CD14-positive monocyte (primary cell): ENCODE measurements at regions of chr19 and their contacts with region 1.

Region 1: DNA sequence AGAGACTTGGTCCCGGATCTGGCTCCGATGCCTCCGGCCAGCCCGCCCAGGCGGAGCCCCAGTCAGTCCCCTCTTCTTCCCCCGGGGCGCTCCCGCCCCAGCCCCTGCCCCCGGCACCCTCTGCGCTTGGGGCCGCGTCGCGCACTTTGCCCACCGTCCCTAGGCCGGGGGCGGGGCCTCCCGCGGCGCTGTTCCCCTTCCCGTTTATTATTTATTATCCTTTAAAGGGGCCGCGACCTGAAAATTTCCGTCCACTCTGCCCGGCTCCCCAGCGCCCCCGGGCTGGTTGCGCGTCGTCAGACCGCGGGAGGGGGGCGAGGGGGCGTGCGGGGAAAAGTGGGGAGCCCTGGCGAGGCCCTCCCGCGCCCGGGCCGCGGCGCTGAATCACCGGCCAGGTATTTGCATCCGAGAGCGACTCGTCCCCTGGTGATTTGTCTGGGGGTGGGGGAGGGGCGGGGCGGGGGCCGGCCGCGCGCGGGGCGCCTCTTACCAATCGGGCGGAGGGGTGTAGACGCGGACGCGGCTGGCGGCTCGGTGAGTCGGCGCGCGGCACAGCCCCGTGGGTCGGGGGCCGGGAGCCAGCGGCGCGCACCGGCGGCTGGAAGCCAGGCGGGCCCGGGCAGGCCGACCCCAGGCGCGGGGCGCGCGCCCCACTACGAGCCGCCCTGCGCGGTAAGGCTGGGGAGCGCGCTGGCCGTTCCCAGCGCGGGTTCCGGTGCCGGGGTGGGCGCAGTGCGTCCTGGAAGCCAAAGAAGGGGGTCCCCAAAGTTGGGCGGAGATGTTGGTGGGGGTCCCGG is at the start of gene ARID3A:
- DNase-seq: peak; percentile 69 to 75 (median 73)
- H3K4me3 ChIP-seq: peak within 1 kb of the TSS; percentile 89 to 99 (median 90)
- H3K4me3 Mint-ChIP-seq: peak within 1 kb of the TSS; percentile 84 to 89
- H3K27ac ChIP-seq: peak within 1 kb of the TSS; percentile 85 to 87
- H3K27ac Mint-ChIP-seq: peak within 1 kb of the TSS in 6 of 7 donors; percentile 79 to 96 (median 92)
- H3K4me1 ChIP-seq: peaks cover 40 to 45% of the 10 kb centered on the region in 2 donors
- H3K4me1 Mint-ChIP-seq: peaks cover 41% of the 10 kb centered on the region
- H3K27me3 ChIP-seq: peaks cover 1 to 8% of the 10 kb centered on the region in 2 donors
- H3K27me3 Mint-ChIP-seq: peaks cover 14 to 16% (median 15%) of the 10 kb centered on the region in 3 donors
- CTCF ChIP-seq: no peak
- polyA plus RNA-seq, gene ARID3A: 2.1 to 41.6 (median 3.2) TPM

Region 2: DNA sequence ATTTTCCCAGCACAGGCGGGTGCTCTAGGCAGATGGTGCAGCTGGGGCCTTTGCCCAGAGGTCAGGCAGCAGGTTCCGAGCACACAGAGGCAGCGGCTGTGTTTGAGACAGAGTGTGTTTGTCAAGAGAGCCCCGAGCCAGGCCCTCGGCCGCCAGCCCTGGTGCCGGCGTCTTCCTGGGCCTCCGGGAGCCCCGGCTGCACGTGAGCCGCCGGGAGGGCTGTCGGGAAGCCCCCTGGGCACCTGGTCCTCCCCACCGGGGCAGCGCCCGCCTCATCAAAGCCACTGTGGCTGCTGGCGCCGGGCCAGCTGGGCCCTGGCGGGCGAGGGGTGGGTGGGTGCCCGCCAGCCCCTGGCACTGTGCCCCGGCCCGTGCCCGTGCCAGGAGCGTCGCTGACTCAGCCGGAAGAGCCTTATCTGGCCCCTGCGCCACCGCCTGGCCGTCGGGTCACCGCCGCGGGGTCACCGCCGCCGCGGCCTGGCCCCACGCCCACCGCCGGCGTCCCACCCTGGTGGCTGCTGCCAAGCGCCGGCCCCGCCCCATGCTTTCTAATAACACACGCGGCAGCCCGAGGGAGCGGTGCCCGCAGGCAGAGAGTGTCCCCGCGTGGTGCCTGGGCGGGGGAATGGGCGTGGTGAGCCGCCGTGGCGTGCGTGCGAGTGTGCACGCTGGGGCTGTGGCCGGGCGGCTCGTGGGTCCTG is 15.0 kb after region 1 on chr19:
- intact Hi-C with region 1: loop called (anchors 2 kb)
- DNase-seq: peak; percentile 76 to 90 (median 90)
- H3K4me3 ChIP-seq: peak overlapping the region; percentile 17 to 71 (median 21)
- H3K4me3 Mint-ChIP-seq: peak overlapping the region; percentile 72 to 85
- H3K27ac ChIP-seq: peak overlapping the region; percentile 42 to 75
- H3K27ac Mint-ChIP-seq: peak overlapping the region; percentile 56 to 82 (median 76)
- H3K4me1 ChIP-seq: peaks cover 22 to 39% of the 10 kb centered on the region in 2 donors
- H3K4me1 Mint-ChIP-seq: peaks cover 43% of the 10 kb centered on the region
- H3K27me3 ChIP-seq: no peaks in the 10 kb centered on the region
- H3K27me3 Mint-ChIP-seq: peaks cover 0 to 1% (median 0%) of the 10 kb centered on the region in 3 donors
- CTCF ChIP-seq: peak; percentile 22

Region 3: GRCh38 chr19:984165-984967 is 58.6 kb after region 1 on chr19 and contains the start of gene WDR18:
- intact Hi-C with region 1: loop called (anchors 1 kb)
- DNase-seq: peak; percentile 84 to 90 (median 86)
- H3K4me3 ChIP-seq: peak within 1 kb of the TSS; percentile 82 to 96 (median 85)
- H3K4me3 Mint-ChIP-seq: peak within 1 kb of the TSS; percentile 88 to 90
- H3K27ac ChIP-seq: peak within 1 kb of the TSS; percentile 7 to 71
- H3K27ac Mint-ChIP-seq: peak within 1 kb of the TSS; percentile 59 to 91 (median 77)
- H3K4me1 ChIP-seq: peaks cover 18 to 28% of the 10 kb centered on the region in 2 donors
- H3K4me1 Mint-ChIP-seq: peaks cover 17% of the 10 kb centered on the region
- H3K27me3 ChIP-seq: no peaks in the 10 kb centered on the region
- H3K27me3 Mint-ChIP-seq: peaks cover 0 to 4% (median 1%) of the 10 kb centered on the region in 3 donors
- CTCF ChIP-seq: no peak
- polyA plus RNA-seq, gene WDR18: 21.3 to 52.7 (median 49.9) TPM

Region 4: GRCh38 chr19:1001538-1002166 is 75.9 kb after region 1 on chr19:
- intact Hi-C with region 1: loop called (anchors 1 kb)
- DNase-seq: peak; percentile 35 to 58 (median 50)
- H3K4me3 ChIP-seq: peak overlapping the region in 1 of 3 experiments; percentile 63
- H3K4me3 Mint-ChIP-seq: peak overlapping the region; percentile 39 to 84
- H3K27ac ChIP-seq: no peak overlapping the region
- H3K27ac Mint-ChIP-seq: no peak overlapping the region
- H3K4me1 ChIP-seq: peaks cover 12 to 13% of the 10 kb centered on the region in 2 donors
- H3K4me1 Mint-ChIP-seq: peaks cover 7% of the 10 kb centered on the region
- H3K27me3 ChIP-seq: peaks cover 11 to 54% of the 10 kb centered on the region in 2 donors
- H3K27me3 Mint-ChIP-seq: peaks cover 43 to 64% (median 48%) of the 10 kb centered on the region in 3 donors
- CTCF ChIP-seq: peak; percentile 99

Region 5: DNA sequence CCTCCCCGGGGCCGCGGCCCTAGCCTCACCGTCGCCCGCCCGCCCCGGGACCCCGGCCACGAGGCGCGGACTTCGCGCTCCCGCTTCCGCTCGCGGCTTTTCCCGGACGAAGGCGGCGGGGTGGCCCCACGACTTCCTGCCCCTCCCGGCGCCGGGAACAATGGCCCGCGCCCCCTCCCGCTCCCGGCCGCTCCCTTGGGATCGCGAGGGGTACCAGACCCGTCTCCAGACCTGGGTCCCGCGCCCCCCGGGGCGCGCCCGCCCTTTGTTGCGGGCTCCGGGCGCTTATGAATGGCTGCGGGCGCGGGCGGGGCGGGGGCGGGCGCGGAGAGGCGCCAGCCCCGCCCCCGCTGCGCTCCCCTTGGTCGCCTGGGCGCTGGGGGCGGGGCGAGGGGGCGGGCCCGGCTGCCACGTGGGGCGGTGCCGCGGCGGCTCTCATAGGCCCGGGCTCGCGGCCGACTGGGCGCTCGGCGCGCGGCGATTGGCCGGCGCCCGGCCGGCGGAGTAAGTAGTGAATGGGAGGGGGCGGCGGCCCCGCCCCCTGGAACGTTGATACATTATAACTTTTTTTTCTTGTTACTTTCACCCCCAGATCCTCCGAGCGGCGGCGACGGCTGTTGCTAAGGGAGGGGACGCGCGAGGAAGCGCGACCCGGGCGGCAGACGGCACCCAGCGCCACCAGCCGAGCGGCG is 323.7 kb after region 1 on chr19:
- intact Hi-C with region 1: loop called in 1 of 2 experiments (anchors 10 kb)
- DNase-seq: peak; percentile 93 to 97 (median 95)
- H3K4me3 ChIP-seq: peak overlapping the region; percentile 77 to 99 (median 83)
- H3K4me3 Mint-ChIP-seq: peak overlapping the region; percentile 84
- H3K27ac ChIP-seq: peak overlapping the region; percentile 64 to 95
- H3K27ac Mint-ChIP-seq: peak overlapping the region in 6 of 7 donors; percentile 46 to 87 (median 75)
- H3K4me1 ChIP-seq: peaks cover 38 to 46% of the 10 kb centered on the region in 2 donors
- H3K4me1 Mint-ChIP-seq: peaks cover 24% of the 10 kb centered on the region
- H3K27me3 ChIP-seq: no peaks in the 10 kb centered on the region
- H3K27me3 Mint-ChIP-seq: peaks cover 0 to 6% (median 0%) of the 10 kb centered on the region in 3 donors
- CTCF ChIP-seq: no peak